SK-N-SH (cell line): ENCODE measurements at regions of chr12 and their contacts with region 1.

Region 1: DNA sequence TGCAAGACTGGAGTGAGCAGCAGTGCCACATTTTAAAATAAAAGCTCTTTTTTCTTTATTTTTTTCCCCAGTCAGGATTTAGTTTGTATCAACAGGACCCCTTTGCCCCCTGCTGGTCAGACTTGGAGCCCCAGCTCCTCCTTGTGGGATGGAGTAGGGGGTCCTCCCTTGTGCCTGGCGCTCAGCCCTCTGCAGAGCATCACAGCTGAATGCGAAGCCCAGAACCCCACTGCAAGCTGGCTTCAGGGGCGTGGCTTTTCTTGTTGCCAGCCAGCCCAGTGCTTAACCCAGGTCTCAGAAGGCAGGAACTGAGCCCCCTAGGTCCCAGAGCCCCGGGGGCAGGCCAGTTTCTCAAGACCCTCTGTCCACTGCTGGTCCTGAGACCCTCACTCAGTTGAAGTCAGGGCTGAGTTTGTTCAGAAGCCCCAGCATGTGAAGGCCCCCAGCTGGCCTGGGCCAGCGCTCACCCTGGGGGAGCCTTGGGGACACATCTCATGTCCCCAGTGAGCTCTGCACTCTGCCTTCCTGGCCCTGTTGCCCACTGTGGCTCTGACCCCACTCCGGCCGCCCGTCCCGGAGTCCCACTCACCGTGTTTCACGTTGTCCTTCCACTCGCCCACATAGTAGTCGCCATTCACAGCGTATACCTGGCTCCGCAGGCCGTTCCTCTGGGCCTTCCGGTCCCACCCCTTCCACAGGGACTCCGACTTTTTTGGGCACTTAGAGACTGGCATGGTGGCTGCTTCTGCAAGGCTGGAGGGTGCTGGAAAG is 519 bp downstream of the MORN3 start:
- DNase-seq: peak; percentile 84
- H3K4me3 ChIP-seq: no peak overlapping the region
- H3K27ac ChIP-seq: no peak overlapping the region
- H3K4me1 ChIP-seq: peaks cover 0 to 6% of the 10 kb centered on the region in 2 experiments; a peak in 1 of 4 replicates
- H3K27me3 ChIP-seq: no peaks in the 10 kb centered on the region
- CTCF ChIP-seq: peak; percentile 79
- EP300 ChIP-seq: no peak
- RAD21 ChIP-seq: peak; percentile 72

Region 2: GRCh38 chr12:121499929-121500793 is 168.8 kb before region 1 on chr12:
- CTCF ChIA-PET with region 1: interaction called, 24 read pairs
- POLR2A ChIA-PET with region 1: no interaction called
- DNase-seq: peak; percentile 90
- H3K4me3 ChIP-seq: peak overlapping the region in 1 of 2 experiments; percentile 54; a peak in 1 of 4 replicates
- H3K27ac ChIP-seq: peak overlapping the region; percentile 2 to 45; a peak in 1 of 4 replicates
- H3K4me1 ChIP-seq: peaks cover 4 to 5% of the 10 kb centered on the region in 2 experiments; a peak in 2 of 4 replicates
- H3K27me3 ChIP-seq: no peaks in the 10 kb centered on the region
- CTCF ChIP-seq: peak; percentile 93
- EP300 ChIP-seq: no peak
- RAD21 ChIP-seq: peak; percentile 70

Region 3: GRCh38 chr12:121637231-121637914 is 31.6 kb before region 1 on chr12:
- CTCF ChIA-PET with region 1: interaction called, 23 read pairs
- POLR2A ChIA-PET with region 1: interaction called, 4 read pairs
- DNase-seq: no peak
- H3K4me3 ChIP-seq: no peak overlapping the region
- H3K27ac ChIP-seq: no peak overlapping the region
- H3K4me1 ChIP-seq: peaks cover 0 to 13% of the 10 kb centered on the region in 2 experiments; a peak in 1 of 4 replicates
- H3K27me3 ChIP-seq: no peaks in the 10 kb centered on the region
- CTCF ChIP-seq: no peak
- EP300 ChIP-seq: no peak
- RAD21 ChIP-seq: no peak

Region 4: DNA sequence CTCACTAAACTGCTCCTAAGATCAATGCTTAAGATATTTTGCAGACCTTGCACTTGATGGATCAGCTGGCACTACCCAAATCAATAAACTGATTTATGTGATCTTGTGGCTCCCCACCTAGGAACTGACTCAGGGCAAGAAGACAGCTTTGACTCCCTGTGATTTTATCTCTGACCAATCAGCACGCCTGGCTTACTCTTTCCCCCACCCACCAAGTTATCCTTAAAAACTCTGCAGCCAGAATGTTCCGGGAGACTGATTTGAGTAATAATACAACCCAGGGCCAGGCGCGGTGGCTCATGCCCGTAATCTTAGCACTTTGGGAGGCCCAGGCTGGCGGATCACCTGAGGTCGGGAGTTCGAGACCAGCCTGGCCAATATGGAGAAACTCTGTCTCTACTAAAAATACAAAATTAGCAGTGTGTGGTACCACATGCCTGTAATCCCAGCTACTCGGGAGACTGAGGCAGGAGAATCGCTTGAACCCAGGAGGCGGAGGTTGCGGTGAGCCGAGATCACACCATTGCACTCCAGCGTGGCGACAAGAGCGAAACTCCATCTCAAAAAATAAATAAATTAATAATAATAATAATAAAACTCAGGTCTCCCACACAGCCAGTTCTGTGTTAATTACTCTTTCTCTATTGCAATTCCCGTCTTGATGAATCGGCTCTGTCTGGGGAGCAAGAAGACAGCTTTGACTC is 11.5 kb before region 1 on chr12:
- CTCF ChIA-PET with region 1: interaction called, 38 read pairs
- POLR2A ChIA-PET with region 1: no interaction called
- DNase-seq: no peak
- H3K4me3 ChIP-seq: no peak overlapping the region
- H3K27ac ChIP-seq: no peak overlapping the region
- H3K4me1 ChIP-seq: no peaks in the 10 kb centered on the region; a peak in 1 of 4 replicates
- H3K27me3 ChIP-seq: no peaks in the 10 kb centered on the region
- CTCF ChIP-seq: no peak
- EP300 ChIP-seq: no peak
- RAD21 ChIP-seq: no peak